A549 (cell line): ENCODE measurements at regions of chr1 and their contacts with region 1.

Region 1: DNA sequence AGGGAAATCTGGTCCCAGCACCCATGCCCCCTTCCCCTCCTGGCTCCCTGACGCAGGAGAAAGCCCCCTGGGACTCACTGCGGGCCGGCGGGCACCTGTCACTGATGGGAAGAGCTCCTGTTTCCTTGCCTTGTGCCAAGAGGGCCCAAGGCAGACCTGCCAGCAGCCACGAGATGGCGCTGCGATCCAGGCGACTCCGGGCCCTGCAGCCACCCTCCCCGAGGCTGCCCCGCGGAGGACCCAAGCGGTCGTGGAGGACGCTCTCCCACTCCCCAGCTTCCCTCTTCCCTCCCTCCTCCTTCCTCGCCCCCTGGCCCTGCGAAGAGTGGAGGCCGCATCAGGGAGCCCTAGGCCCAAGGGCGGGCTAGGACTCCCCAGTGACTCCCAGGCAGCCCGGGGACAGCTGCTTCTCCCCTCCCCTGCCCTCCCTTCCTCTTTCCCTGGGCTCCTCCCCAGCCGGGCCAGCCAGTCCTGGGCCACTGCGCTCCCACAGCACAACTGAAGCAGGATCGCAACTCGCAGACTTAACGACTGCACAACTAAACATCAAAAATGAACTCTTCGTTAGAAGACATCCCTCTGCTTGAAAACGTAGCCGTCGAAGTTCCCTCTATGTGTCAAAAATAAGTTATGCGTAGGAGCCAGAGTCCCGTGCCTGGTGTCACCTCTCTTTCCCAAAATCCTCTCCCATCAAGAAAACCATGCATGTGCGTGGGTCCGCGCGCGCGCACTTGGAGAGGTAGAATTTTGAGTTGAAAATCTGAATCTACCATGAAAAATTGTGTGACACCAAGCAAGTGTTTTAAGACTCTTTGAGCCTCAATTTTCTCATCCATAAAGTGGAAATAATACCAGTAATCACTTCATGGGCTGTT is 34.2 kb downstream of the BATF3 start:
- DNase-seq: peak; percentile 82 to 87
- ATAC-seq: peak; percentile 92 to 95
- H3K4me3 ChIP-seq: peak overlapping the region; percentile 45
- H3K27ac ChIP-seq: peak overlapping the region; percentile 77 to 90
- H3K4me1 ChIP-seq: peaks cover 39% of the 10 kb centered on the region
- CTCF ChIP-seq: peak; percentile 93
- EP300 ChIP-seq: no peak
- POLR2A ChIP-seq: peak; percentile 38
- RAD21 ChIP-seq: peak; percentile 85 to 98

Region 2: DNA sequence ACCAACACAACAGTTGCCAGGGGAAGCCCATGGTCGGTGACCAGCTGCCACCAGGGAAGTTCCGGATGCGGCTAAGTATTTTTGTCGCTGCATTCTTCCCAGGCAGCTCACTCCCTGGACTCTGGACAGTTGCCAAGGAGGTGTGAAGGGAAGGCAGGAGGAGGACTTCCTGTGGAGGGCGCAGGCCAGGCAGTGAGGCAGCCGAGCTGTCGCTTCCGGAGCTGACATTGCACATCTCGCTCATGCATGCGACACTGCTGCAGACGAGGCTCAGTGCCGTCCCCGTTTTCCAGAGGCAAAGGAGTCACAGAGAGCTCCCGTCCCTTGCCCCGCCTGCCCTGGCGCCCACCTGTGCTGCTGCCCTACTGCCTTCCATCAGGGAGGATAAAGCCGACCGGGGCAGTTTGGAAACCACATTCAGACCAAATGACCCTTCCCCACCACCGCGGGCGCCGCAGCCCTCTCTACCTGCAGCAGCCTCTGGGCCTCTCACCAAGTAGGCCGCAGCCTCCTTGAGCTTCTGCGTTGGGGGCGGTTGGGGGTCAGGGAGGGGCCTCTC is 151.3 kb before region 1 on chr1:
- CTCF ChIA-PET with region 1: no interaction called
- POLR2A ChIA-PET with region 1: no interaction called
- DNase-seq: peak; percentile 59 to 80
- ATAC-seq: peak; percentile 25 to 49; a peak in 3 of 6 replicates
- H3K4me3 ChIP-seq: no peak overlapping the region
- H3K27ac ChIP-seq: peak overlapping the region; percentile 5 to 76; a peak in 5 of 6 replicates
- H3K4me1 ChIP-seq: peaks cover 36% of the 10 kb centered on the region
- CTCF ChIP-seq: no peak
- EP300 ChIP-seq: no peak
- POLR2A ChIP-seq: no peak
- RAD21 ChIP-seq: no peak

Region 3: GRCh38 chr1:212545941-212546635 is 119.4 kb before region 1 on chr1:
- CTCF ChIA-PET with region 1: no interaction called
- POLR2A ChIA-PET with region 1: no interaction called
- DNase-seq: no peak
- ATAC-seq: no peak; a peak in 1 of 6 replicates
- H3K4me3 ChIP-seq: no peak overlapping the region
- H3K27ac ChIP-seq: no peak overlapping the region
- H3K4me1 ChIP-seq: peaks cover 5% of the 10 kb centered on the region; the same call in 1 of the 3 replicates
- CTCF ChIP-seq: no peak
- EP300 ChIP-seq: no peak
- POLR2A ChIP-seq: no peak
- RAD21 ChIP-seq: no peak

Region 4: GRCh38 chr1:212608209-212608955 is 57.1 kb before region 1 on chr1 and contains the start of gene ATF3:
- CTCF ChIA-PET with region 1: interaction called, 9 read pairs
- POLR2A ChIA-PET with region 1: interaction called, 17 read pairs
- DNase-seq: peak; percentile 94 to 98
- ATAC-seq: peak; percentile 82 to 84
- H3K4me3 ChIP-seq: peak within 1 kb of the TSS; percentile 90
- H3K27ac ChIP-seq: peak within 1 kb of the TSS; percentile 88 to 93
- H3K4me1 ChIP-seq: peaks cover 23% of the 10 kb centered on the region; the same call in 2 of the 3 replicates
- CTCF ChIP-seq: no peak
- EP300 ChIP-seq: peak in 1 of 2 experiments; percentile 65; a peak in 2 of 5 replicates
- POLR2A ChIP-seq: peak; percentile 99
- RAD21 ChIP-seq: no peak; a peak in 2 of 5 replicates
- polyA plus RNA-seq, gene ATF3: 33.4 and 62.9 TPM in 2 replicates

Region 5: GRCh38 chr1:212641956-212642355 is 23.5 kb before region 1 on chr1:
- CTCF ChIA-PET with region 1: interaction called, 26 read pairs
- POLR2A ChIA-PET with region 1: no interaction called
- DNase-seq: no peak
- ATAC-seq: no peak
- H3K4me3 ChIP-seq: no peak overlapping the region
- H3K27ac ChIP-seq: no peak overlapping the region
- H3K4me1 ChIP-seq: no peaks in the 10 kb centered on the region
- CTCF ChIP-seq: no peak
- EP300 ChIP-seq: no peak
- POLR2A ChIP-seq: no peak
- RAD21 ChIP-seq: no peak

Region 6: DNA sequence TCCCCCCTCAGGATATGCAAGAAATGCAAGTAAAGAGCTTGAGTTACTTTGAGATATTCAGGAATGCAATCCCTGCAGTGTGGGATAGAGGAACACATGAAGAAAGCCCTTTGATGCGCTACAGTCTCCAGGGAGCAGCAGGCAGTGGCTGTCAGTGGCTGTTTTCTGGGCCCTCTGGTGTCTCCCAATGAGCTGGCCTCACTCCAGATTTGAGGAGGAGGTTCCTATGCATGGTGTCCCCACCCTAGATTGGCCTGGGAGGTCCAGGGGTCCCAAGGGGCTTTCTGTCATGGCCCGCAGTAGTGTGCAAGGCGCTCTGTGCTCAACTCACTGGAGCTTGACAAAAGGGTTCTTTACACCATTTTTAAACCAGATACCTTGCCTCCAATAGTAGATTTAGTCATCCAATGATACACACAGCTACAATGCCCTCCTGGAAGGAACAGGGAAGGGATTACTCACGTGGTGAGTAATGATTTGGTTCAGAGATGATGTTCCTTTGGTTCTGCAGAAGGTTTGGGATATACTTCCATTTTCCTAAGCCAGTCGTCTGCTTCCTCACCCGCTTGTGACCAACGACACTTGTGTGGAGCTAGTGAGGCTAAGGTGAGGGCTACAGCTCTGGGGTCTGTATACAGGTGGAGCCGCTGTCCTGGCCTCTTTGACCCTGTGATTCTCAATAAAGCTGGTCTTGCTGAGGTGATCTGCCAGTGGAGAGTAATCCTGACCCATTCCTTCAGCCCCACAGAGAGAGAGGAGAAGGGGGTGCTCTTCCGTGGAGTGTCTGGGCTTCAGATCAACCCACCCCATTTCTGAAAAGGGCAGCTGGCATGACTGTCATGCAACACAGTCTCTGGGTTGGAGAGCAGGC is 27.5 kb after region 1 on chr1:
- CTCF ChIA-PET with region 1: interaction called, 44 read pairs
- POLR2A ChIA-PET with region 1: no interaction called
- DNase-seq: peak in 1 of 2 experiments; percentile 37
- ATAC-seq: peak; percentile 60 to 61; a peak in 4 of 6 replicates
- H3K4me3 ChIP-seq: no peak overlapping the region
- H3K27ac ChIP-seq: no peak overlapping the region
- H3K4me1 ChIP-seq: no peaks in the 10 kb centered on the region
- CTCF ChIP-seq: no peak
- EP300 ChIP-seq: no peak
- POLR2A ChIP-seq: no peak
- RAD21 ChIP-seq: no peak

Region 7: GRCh38 chr1:212749821-212750535 is 84.5 kb after region 1 on chr1:
- CTCF ChIA-PET with region 1: interaction called, 53 read pairs
- POLR2A ChIA-PET with region 1: no interaction called
- DNase-seq: peak; percentile 64 to 77
- ATAC-seq: peak; percentile 76 to 91
- H3K4me3 ChIP-seq: no peak overlapping the region
- H3K27ac ChIP-seq: peak overlapping the region in 1 of 2 experiments; percentile 59; a peak in 3 of 6 replicates
- H3K4me1 ChIP-seq: peaks cover 12% of the 10 kb centered on the region
- CTCF ChIP-seq: peak; percentile 85
- EP300 ChIP-seq: no peak
- POLR2A ChIP-seq: no peak
- RAD21 ChIP-seq: peak; percentile 61 to 64

Region 8: DNA sequence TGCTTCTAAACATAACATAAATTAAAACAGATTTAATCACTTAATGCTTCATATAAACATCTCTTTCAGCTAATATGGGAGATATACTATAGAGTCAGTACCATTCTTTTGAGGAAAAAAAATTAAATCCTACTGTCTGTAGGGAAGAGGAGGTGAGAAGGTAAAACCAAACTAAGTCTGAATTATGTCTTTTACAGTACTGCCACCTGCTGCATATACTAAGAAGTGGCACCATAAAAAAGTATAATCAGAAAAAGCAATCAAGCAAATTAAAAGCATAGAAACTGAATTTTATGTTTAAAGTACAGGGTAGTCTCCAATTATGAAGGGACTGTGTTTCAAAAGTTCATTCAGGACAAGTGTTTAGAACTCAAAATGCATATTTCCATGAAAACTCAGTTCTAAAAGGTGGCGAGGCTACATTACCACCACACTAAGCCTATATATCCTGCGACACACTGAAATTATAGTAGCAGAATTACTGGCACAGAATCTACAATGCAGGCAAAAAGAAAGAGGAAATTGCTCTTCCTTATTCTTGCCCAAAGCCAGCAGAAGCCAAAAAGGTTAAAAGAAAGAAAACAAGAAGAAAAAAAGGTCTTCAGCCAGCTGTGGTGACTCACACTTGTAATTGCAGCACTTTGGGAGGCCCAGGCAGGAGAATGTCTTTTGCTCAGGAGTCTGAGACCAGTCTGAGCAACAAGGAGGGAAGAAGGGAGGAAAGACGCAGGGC is 117.1 kb after region 1 on chr1:
- CTCF ChIA-PET with region 1: interaction called, 115 read pairs
- POLR2A ChIA-PET with region 1: no interaction called
- DNase-seq: peak in 1 of 2 experiments; percentile 48
- ATAC-seq: peak; percentile 78 to 80
- H3K4me3 ChIP-seq: no peak overlapping the region
- H3K27ac ChIP-seq: no peak overlapping the region
- H3K4me1 ChIP-seq: no peaks in the 10 kb centered on the region
- CTCF ChIP-seq: peak; percentile 83
- EP300 ChIP-seq: no peak
- POLR2A ChIP-seq: no peak
- RAD21 ChIP-seq: peak; percentile 78 to 85